Adrenal gland (tissue), 19 donors: ENCODE measurements at regions of chr19 and their contacts with region 1.

Region 1: GRCh38 chr19:45817010-45817724 is 2.1 kb upstream of the RSPH6A start:
- DNase-seq: peak; percentile 93 to 97 (median 96)
- H3K4me3 ChIP-seq: no peak overlapping the region
- H3K27ac ChIP-seq: no peak overlapping the region
- H3K4me1 ChIP-seq: no peaks in the 10 kb centered on the region
- H3K27me3 ChIP-seq: no peaks in the 10 kb centered on the region
- CTCF ChIP-seq: peak; percentile 94 to 99 (median 98)
- POLR2A ChIP-seq: no peak

Region 2: GRCh38 chr19:45882652-45883585 is 65.8 kb after region 1 on chr19:
- intact Hi-C with region 1: loop called in 1 of 2 experiments (anchors 5 kb)
- DNase-seq: peak; percentile 72 to 93 (median 87)
- H3K4me3 ChIP-seq: peak overlapping the region in 1 of 4 donors; percentile 52
- H3K27ac ChIP-seq: peak overlapping the region in 1 of 5 donors; percentile 29
- H3K4me1 ChIP-seq: peaks cover 4 to 41% of the 10 kb centered on the region in 2 donors
- H3K27me3 ChIP-seq: no peaks in the 10 kb centered on the region
- CTCF ChIP-seq: peak; percentile 85 to 98 (median 91)
- POLR2A ChIP-seq: no peak